T-cell (primary cell): ENCODE measurements at regions of chr2 and their contacts with region 1.

Region 1: GRCh38 chr2:169933124-169933711 is 106.0 kb downstream of the UBR3 start:
- DNase-seq: peak in 1 of 35 experiments; percentile 40
- ATAC-seq: no peak
- H3K4me3 ChIP-seq: no peak overlapping the region
- H3K4me3 Mint-ChIP-seq: no peak overlapping the region
- H3K27ac ChIP-seq: no peak overlapping the region
- H3K27ac Mint-ChIP-seq: peak overlapping the region in 1 of 2 donors; percentile 22
- H3K4me1 ChIP-seq: no peaks in the 10 kb centered on the region
- H3K4me1 Mint-ChIP-seq: peaks cover 0 to 4% (median 3%) of the 10 kb centered on the region in 3 donors
- H3K27me3 ChIP-seq: no peaks in the 10 kb centered on the region
- H3K27me3 Mint-ChIP-seq: no peaks in the 10 kb centered on the region

Region 2: DNA sequence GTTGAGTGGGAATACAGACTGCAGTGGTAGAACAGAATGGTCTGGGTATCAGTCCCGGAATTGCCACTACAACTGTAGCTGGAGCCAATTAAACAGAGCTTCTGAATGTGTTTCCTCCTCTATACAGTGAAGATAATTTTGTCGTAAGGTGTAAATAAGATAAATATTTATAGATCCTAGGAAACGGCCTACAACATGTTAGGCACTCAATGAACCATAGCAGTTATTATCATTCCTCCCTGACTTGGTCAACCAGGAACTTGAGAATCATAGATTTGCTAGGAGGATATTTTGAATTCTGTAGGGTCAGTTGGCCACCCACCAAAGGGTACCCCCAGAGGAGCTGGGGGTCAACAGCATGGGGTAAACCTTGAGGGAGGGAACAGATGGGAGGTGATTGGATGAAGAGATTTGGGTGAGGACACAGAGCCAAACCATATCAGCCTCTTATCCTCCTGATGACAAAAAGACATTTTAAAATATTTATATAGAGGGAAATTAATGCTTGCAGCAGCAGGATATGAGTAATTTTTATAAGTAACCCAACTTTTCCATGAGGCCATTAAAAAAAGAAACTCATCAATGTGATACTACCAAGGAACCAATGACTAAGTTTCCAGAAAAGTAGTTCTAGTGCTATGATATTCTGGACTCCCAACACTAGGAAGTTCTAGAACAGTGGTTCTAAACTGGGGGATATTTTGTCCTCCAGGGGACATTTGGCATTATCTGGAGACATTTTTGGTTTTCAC is 859.8 kb before region 1 on chr2:
- CTCF ChIA-PET with region 1: interaction called in 1 of 2 experiments, 11 read pairs
- POLR2A ChIA-PET with region 1: no interaction called
- DNase-seq: no peak
- ATAC-seq: no peak
- H3K4me3 ChIP-seq: no peak overlapping the region
- H3K4me3 Mint-ChIP-seq: no peak overlapping the region
- H3K27ac ChIP-seq: no peak overlapping the region
- H3K27ac Mint-ChIP-seq: no peak overlapping the region
- H3K4me1 ChIP-seq: no peaks in the 10 kb centered on the region
- H3K4me1 Mint-ChIP-seq: peaks cover 0 to 14% (median 8%) of the 10 kb centered on the region in 3 donors
- H3K27me3 ChIP-seq: no peaks in the 10 kb centered on the region
- H3K27me3 Mint-ChIP-seq: peaks cover 0 to 10% of the 10 kb centered on the region in 2 donors

Region 3: DNA sequence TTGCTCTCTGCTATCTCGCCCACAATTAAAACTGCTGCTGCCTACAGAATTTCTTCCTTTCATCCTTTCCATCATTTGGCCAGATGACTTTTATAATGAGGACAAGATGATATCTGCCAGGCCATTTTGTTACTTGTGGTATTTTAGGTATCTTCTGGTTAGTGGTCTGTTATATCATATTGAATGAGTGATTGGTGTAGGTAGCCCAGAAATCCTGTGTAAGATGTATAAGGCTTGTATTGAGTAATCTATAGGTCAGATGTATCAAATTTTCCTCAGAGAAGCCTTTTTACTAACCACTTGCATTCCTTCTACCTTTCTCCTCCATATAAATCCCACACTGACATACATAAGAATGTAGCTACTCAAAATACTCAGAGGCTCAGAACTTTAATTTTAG is 12.3 kb after region 1 on chr2:
- CTCF ChIA-PET with region 1: interaction called, 3 read pairs
- POLR2A ChIA-PET with region 1: interaction called in 1 of 2 experiments, 14 read pairs
- DNase-seq: no peak
- ATAC-seq: no peak
- H3K4me3 ChIP-seq: no peak overlapping the region
- H3K4me3 Mint-ChIP-seq: no peak overlapping the region
- H3K27ac ChIP-seq: no peak overlapping the region
- H3K27ac Mint-ChIP-seq: no peak overlapping the region
- H3K4me1 ChIP-seq: no peaks in the 10 kb centered on the region
- H3K4me1 Mint-ChIP-seq: no peaks in the 10 kb centered on the region
- H3K27me3 ChIP-seq: no peaks in the 10 kb centered on the region
- H3K27me3 Mint-ChIP-seq: no peaks in the 10 kb centered on the region